ENCODE measurements at regions of chr1 and their contacts with region 1.

Region 1: DNA sequence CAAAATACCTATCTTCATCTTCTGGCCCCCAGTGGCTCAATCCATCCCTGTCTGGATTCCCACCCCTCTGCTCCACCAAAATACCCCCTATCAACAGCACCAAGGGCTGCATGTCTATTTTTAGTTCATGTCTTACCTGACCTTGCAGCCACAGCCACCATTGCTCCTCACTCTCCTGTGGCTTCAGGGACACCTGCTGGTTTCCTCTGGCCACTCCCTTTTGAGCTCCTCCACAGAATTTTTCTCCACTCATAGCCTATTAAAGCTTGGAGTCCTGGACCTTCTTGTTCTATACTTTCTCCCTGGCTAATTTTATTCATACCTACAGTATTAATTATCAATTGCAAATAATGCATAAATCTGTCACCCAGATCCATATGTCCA is 125.3 kb upstream of the NGF start:
- DNase-seq: no peak
- H3K4me3 ChIP-seq: no peak overlapping the region
- H3K27ac ChIP-seq: no peak overlapping the region
- H3K4me1 ChIP-seq: no peaks in the 10 kb centered on the region
- H3K27me3 ChIP-seq: no peaks in the 10 kb centered on the region
- CTCF ChIP-seq: no peak

Region 2: DNA sequence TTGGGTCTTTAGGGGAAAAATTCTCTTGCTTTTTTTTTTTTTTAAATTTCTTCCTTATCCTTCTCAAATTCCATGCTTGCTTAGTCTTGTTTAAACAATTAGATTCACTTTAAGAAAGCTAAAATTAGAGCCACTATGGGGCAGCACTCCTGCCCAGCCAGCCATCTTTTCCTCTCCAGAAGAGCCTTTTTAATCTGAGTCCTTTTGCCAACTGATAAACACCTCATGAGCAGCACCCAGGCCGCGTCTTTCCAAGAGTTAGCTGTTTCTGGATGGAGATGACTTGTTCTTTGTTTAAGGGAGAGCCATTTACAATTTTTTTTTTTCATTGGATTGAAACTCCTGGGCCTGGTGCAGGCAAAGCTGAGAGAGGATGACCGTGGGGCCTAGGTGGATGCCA is 320.7 kb before region 1 on chr1:
- intact Hi-C with region 1: loop called (anchors 5 kb)
- DNase-seq: peak in 1 of 5 donors; percentile 35
- H3K4me3 ChIP-seq: no peak overlapping the region
- H3K27ac ChIP-seq: no peak overlapping the region
- H3K4me1 ChIP-seq: no peaks in the 10 kb centered on the region
- H3K27me3 ChIP-seq: no peaks in the 10 kb centered on the region
- CTCF ChIP-seq: no peak

Region 3: DNA sequence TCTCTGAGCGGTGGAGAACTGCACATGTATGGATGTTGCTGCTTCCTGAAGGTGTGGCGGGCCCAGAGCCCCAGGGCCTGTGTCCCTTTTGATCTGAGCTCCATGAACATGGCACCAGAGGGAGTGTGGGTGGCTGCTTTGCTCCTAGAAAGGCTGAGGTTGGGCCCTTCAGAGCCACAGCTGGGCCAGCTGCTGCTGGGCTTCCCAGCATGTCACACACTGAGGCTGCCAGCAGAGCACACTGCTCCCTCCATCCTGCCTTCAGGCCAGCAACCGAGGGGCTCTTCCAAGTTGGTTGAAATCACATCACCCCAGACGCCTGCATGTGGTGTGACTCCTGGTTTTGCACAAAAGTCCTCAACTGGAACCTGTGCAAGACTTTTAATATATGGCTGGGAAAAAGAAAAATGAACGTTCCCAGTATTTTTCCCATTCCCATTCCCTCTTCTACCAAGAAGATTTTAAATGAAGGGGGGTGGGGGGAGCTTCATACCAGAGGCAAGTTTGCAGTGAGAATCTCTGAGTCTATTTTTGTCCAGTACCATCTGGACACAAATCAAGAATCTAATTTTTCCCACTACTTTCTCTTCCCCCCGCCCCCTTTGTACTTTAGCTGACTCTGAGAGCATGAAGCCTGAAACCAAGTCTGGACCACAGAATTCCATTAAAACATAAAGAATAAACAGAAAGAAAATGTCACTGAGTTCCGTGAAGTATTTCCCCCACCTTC is 99.1 kb before region 1 on chr1:
- intact Hi-C with region 1: no loop called
- DNase-seq: peak in 3 of 5 donors; percentile 26 to 75 (median 71)
- H3K4me3 ChIP-seq: no peak overlapping the region
- H3K27ac ChIP-seq: peak overlapping the region in 1 of 2 donors; percentile 32
- H3K4me1 ChIP-seq: peaks cover 0 to 3% (median 0%) of the 10 kb centered on the region in 3 donors
- H3K27me3 ChIP-seq: no peaks in the 10 kb centered on the region
- CTCF ChIP-seq: no peak

Region 4: DNA sequence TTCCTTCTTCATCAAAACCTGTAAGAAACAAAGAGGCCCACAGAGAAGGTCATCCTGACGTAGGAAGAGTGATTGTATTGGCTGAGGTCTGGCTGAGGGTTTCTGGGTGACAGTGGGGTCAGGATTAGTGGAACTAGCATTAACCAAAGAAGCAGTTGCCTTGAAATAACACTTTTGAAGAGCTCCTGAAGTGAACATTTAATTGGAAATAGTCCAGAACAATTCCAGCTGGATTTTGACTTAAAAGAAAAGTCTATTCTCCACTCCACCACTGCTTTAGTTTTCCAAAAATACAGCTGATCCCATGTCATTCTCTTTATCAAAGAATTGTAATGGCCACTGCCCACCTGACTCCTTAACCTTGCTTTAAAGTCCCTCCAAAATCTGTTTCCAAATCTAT is 277.5 kb after region 1 on chr1:
- intact Hi-C with region 1: no loop called
- DNase-seq: peak in 1 of 5 donors; percentile 58
- H3K4me3 ChIP-seq: no peak overlapping the region
- H3K27ac ChIP-seq: no peak overlapping the region
- H3K4me1 ChIP-seq: no peaks in the 10 kb centered on the region
- H3K27me3 ChIP-seq: no peaks in the 10 kb centered on the region
- CTCF ChIP-seq: no peak

Measured in kidney (tissue), 22 donors.